Panc1 (cell line): ENCODE measurements at regions of chr16 and their contacts with region 1.

Region 1: GRCh38 chr16:19502395-19503131 is 19.3 kb downstream of the GDE1 start:
- DNase-seq: peak; percentile 70
- ATAC-seq: peak; percentile 89
- H3K4me3 ChIP-seq: no peak overlapping the region
- H3K27ac ChIP-seq: no peak overlapping the region
- H3K4me1 ChIP-seq: no peaks in the 10 kb centered on the region
- H3K27me3 ChIP-seq: no peaks in the 10 kb centered on the region
- CTCF ChIP-seq: peak; percentile 93

Region 2: GRCh38 chr16:19389246-19389645 is 113.3 kb before region 1 on chr16:
- CTCF ChIA-PET with region 1: interaction called, 24 read pairs
- POLR2A ChIA-PET with region 1: no interaction called
- in situ Hi-C with region 1: no loop called
- intact Hi-C with region 1: loop called (anchors 1 kb)
- DNase-seq: no peak
- ATAC-seq: peak; percentile 96
- H3K4me3 ChIP-seq: no peak overlapping the region
- H3K27ac ChIP-seq: no peak overlapping the region
- H3K4me1 ChIP-seq: no peaks in the 10 kb centered on the region; the same call in 1 of the 2 replicates
- H3K27me3 ChIP-seq: 0 out of 2 replicates have a peak, but pooled peaks cover 2% of the 10 kb centered on the region
- CTCF ChIP-seq: peak; percentile 88

Region 3: GRCh38 chr16:19935699-19936098 is 433.1 kb after region 1 on chr16:
- CTCF ChIA-PET with region 1: no interaction called
- POLR2A ChIA-PET with region 1: no interaction called
- in situ Hi-C with region 1: no loop called
- intact Hi-C with region 1: no loop called
- DNase-seq: no peak
- ATAC-seq: no peak
- H3K4me3 ChIP-seq: no peak overlapping the region
- H3K27ac ChIP-seq: no peak overlapping the region
- H3K4me1 ChIP-seq: no peaks in the 10 kb centered on the region
- H3K27me3 ChIP-seq: peaks cover 13% of the 10 kb centered on the region
- CTCF ChIP-seq: no peak